ENCODE measurements at regions of chr4 and their contacts with region 1.

Region 1: GRCh38 chr4:153785910-153786721 is 2.8 kb downstream of the SFRP2 start:
- DNase-seq: no peak
- ATAC-seq: peak; percentile 67
- H3K4me3 ChIP-seq: no peak overlapping the region
- H3K27ac ChIP-seq: no peak overlapping the region
- H3K4me1 ChIP-seq: 0 out of 2 replicates have a peak, but pooled peaks cover 3% of the 10 kb centered on the region
- H3K27me3 ChIP-seq: peaks cover 19 to 31% of the 10 kb centered on the region in 2 experiments
- CTCF ChIP-seq: peak; percentile 34 to 52 (median 43)
- EP300 ChIP-seq: no peak
- POLR2A ChIP-seq: no peak
- RAD21 ChIP-seq: peak; percentile 55

Region 2: GRCh38 chr4:153634738-153635353 is 151.3 kb before region 1 on chr4:
- CTCF ChIA-PET with region 1: no interaction called
- POLR2A ChIA-PET with region 1: no interaction called
- RAD21 ChIA-PET with region 1: no interaction called
- SMC1A ChIA-PET with region 1: no interaction called
- in situ Hi-C with region 1: no loop called
- intact Hi-C with region 1: no loop called
- DNase-seq: no peak
- ATAC-seq: peak; percentile 9; the same call in 1 of the 3 replicates
- H3K4me3 ChIP-seq: no peak overlapping the region
- H3K27ac ChIP-seq: no peak overlapping the region
- H3K4me1 ChIP-seq: no peaks in the 10 kb centered on the region
- H3K27me3 ChIP-seq: no peaks in the 10 kb centered on the region
- CTCF ChIP-seq: peak; percentile 24 to 56 (median 53); a peak in 4 of 6 replicates
- EP300 ChIP-seq: no peak
- POLR2A ChIP-seq: no peak
- RAD21 ChIP-seq: 0 out of 2 replicates have a peak, but pooled peaks have one; percentile 16

Region 3: GRCh38 chr4:153798420-153798819 is 12.3 kb after region 1 on chr4:
- CTCF ChIA-PET with region 1: interaction called, 25 read pairs
- POLR2A ChIA-PET with region 1: no interaction called
- RAD21 ChIA-PET with region 1: no interaction called
- SMC1A ChIA-PET with region 1: interaction called, 4 read pairs
- in situ Hi-C with region 1: no loop called
- intact Hi-C with region 1: no loop called
- DNase-seq: no peak
- ATAC-seq: no peak
- H3K4me3 ChIP-seq: no peak overlapping the region
- H3K27ac ChIP-seq: no peak overlapping the region
- H3K4me1 ChIP-seq: no peaks in the 10 kb centered on the region
- H3K27me3 ChIP-seq: 0 out of 4 replicates have a peak, but pooled peaks cover 0 to 2% of the 10 kb centered on the region in 2 experiments
- CTCF ChIP-seq: no peak
- EP300 ChIP-seq: no peak
- POLR2A ChIP-seq: no peak
- RAD21 ChIP-seq: no peak

Region 4: DNA sequence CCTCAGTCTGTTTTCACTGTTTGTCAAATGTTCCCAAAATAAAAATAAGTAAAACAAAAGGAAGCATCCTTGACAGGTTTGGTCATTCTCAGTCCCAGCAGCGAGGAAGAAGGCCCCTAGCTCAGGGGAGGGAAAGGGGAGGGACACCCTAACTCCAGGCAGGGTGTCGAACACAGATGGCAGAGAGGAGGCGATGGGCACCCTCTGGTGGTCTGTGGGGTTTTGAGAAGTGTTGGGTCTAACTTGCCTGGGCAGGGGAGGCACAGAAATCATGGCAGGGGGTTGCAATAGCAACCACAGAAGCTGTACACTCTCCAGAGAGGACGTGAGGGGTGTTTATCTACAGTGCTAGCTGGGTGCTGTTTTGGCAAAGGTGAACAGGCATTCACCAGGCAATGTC is 232.5 kb after region 1 on chr4:
- CTCF ChIA-PET with region 1: interaction called, 3 read pairs
- POLR2A ChIA-PET with region 1: no interaction called
- RAD21 ChIA-PET with region 1: no interaction called
- SMC1A ChIA-PET with region 1: no interaction called
- in situ Hi-C with region 1: no loop called
- intact Hi-C with region 1: loop called (anchors 10 kb)
- DNase-seq: no peak
- ATAC-seq: peak; percentile 27; the same call in 1 of the 3 replicates
- H3K4me3 ChIP-seq: no peak overlapping the region
- H3K27ac ChIP-seq: no peak overlapping the region
- H3K4me1 ChIP-seq: no peaks in the 10 kb centered on the region
- H3K27me3 ChIP-seq: no peaks in the 10 kb centered on the region; a peak in 1 of 4 replicates
- CTCF ChIP-seq: peak in 1 of 3 experiments; percentile 3; a peak in 1 of 6 replicates
- EP300 ChIP-seq: no peak
- POLR2A ChIP-seq: no peak
- RAD21 ChIP-seq: peak; percentile 33

Region 5: GRCh38 chr4:154082760-154083535 is 296.8 kb after region 1 on chr4:
- CTCF ChIA-PET with region 1: interaction called, 3 read pairs
- POLR2A ChIA-PET with region 1: no interaction called
- RAD21 ChIA-PET with region 1: no interaction called
- SMC1A ChIA-PET with region 1: interaction called, 6 read pairs
- in situ Hi-C with region 1: no loop called
- intact Hi-C with region 1: loop called (anchors 1 kb)
- DNase-seq: no peak
- ATAC-seq: peak; percentile 84
- H3K4me3 ChIP-seq: no peak overlapping the region
- H3K27ac ChIP-seq: no peak overlapping the region
- H3K4me1 ChIP-seq: no peaks in the 10 kb centered on the region
- H3K27me3 ChIP-seq: no peaks in the 10 kb centered on the region
- CTCF ChIP-seq: peak; percentile 32 to 35 (median 33); a peak in 4 of 6 replicates
- EP300 ChIP-seq: no peak
- POLR2A ChIP-seq: no peak
- RAD21 ChIP-seq: peak; percentile 28; the same call in 1 of the 2 replicates

Region 6: GRCh38 chr4:154578919-154579318 is 792.8 kb after region 1 on chr4:
- CTCF ChIA-PET with region 1: no interaction called
- POLR2A ChIA-PET with region 1: no interaction called
- RAD21 ChIA-PET with region 1: no interaction called
- SMC1A ChIA-PET with region 1: no interaction called
- in situ Hi-C with region 1: no loop called
- intact Hi-C with region 1: no loop called
- DNase-seq: no peak
- ATAC-seq: no peak
- H3K4me3 ChIP-seq: no peak overlapping the region
- H3K27ac ChIP-seq: no peak overlapping the region
- H3K4me1 ChIP-seq: no peaks in the 10 kb centered on the region
- H3K27me3 ChIP-seq: no peaks in the 10 kb centered on the region
- CTCF ChIP-seq: no peak
- EP300 ChIP-seq: no peak
- POLR2A ChIP-seq: no peak
- RAD21 ChIP-seq: no peak